Activated T-helper 1 cell treated with anti-CD3 and anti-CD28 coated beads, Interleukin-12 subunit alpha, Interleukin-12 subunit beta, Interleukin-2, Interleukin-4 antibody, amounts not matched to agents 30 ng/mL and 10 ng/mL and 1 ng/mL, durations not matched to agents 14 hours and 24 hours and 36 hours (primary cell): ENCODE measurements at regions of chr10 and their contacts with region 1.

Region 1: DNA sequence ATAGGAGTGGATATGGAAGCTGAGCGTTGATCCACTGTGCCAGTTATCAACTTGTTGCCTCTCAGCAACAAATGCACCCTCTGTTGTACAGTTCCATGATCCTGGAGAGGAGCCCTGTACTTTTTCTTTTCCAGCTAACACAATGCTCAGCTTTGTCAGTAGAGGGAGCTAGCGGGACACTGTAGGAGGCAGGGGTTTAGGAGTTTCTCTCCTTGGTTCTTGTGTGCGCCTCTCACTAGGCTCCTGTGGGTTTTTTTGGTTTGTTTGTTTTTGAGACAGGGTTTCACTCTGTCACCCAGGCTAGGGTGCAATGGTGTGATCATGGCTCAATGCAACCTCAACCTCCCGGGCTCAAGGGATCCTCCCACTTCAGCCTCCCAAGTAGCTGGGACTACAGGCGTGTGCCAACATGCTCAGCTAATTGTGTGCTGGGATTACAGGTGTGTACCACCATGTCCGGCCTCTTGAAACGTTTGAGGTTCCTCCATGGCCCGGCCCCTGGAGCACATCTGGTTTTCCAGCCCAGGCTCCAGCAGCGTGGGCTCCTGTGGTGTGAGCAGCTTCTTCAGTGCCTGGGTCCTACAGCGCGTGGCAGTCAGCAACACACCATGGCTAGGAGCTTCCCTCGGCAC is 12.0 kb upstream of the MARVELD1 start:
- DNase-seq: peak; percentile 34
- H3K4me3 Mint-ChIP-seq: no peak overlapping the region
- H3K27ac Mint-ChIP-seq: no peak overlapping the region
- H3K4me1 Mint-ChIP-seq: no peaks in the 10 kb centered on the region
- H3K27me3 Mint-ChIP-seq: peaks cover 8% of the 10 kb centered on the region

Region 2: GRCh38 chr10:97434055-97434454 is 267.5 kb before region 1 on chr10:
- intact Hi-C with region 1: no loop called
- DNase-seq: no peak
- H3K4me3 Mint-ChIP-seq: no peak overlapping the region
- H3K27ac Mint-ChIP-seq: peak overlapping the region; percentile 48
- H3K4me1 Mint-ChIP-seq: peaks cover 14% of the 10 kb centered on the region
- H3K27me3 Mint-ChIP-seq: no peaks in the 10 kb centered on the region

Region 3: GRCh38 chr10:97676770-97677581 is 24.6 kb before region 1 on chr10:
- intact Hi-C with region 1: loop called (anchors 2 kb)
- DNase-seq: no peak
- H3K4me3 Mint-ChIP-seq: no peak overlapping the region
- H3K27ac Mint-ChIP-seq: no peak overlapping the region
- H3K4me1 Mint-ChIP-seq: peaks cover 10% of the 10 kb centered on the region
- H3K27me3 Mint-ChIP-seq: no peaks in the 10 kb centered on the region

Region 4: DNA sequence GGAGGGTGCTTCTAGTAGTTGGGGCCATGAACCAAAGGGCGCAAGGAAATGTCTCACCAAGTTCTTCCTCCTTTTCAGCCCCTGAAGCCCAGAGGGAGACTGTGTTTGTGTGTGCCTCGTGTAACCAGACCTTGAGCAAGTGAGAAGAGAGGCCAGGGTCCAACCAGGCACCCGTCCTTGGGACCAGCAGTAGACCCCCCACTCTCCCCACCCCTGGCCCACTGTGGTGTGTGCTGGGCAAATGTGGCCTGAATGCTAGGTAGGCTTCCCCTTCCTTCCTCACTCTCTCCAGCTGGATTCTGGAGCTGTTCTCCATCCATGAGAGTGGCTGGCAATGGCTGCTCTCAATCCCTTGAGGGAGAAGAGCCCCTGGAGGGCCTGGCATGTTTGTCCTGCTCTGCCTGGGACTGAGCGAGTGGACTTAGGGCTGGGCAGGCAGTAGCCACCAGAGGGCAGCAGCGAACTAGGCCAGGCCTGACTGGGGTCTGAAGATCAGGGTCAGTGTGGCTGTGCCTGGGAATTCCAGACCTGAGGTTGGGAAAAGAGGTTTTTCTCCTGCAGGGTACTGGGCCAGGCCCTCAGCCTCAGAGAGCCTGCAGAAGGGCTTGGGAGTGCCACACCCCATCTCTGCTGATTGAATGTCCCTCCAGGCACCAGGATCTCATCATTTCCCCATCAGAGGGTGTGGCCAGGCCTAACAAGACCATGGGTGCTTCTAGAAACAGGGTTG is 57.8 kb after region 1 on chr10:
- intact Hi-C with region 1: loop called (anchors 1 kb)
- DNase-seq: peak; percentile 22
- H3K4me3 Mint-ChIP-seq: no peak overlapping the region
- H3K27ac Mint-ChIP-seq: no peak overlapping the region
- H3K4me1 Mint-ChIP-seq: no peaks in the 10 kb centered on the region
- H3K27me3 Mint-ChIP-seq: no peaks in the 10 kb centered on the region

Region 5: GRCh38 chr10:97792141-97792721 is 90.7 kb after region 1 on chr10:
- intact Hi-C with region 1: no loop called
- DNase-seq: peak; percentile 56
- H3K4me3 Mint-ChIP-seq: no peak overlapping the region
- H3K27ac Mint-ChIP-seq: no peak overlapping the region
- H3K4me1 Mint-ChIP-seq: peaks cover 21% of the 10 kb centered on the region
- H3K27me3 Mint-ChIP-seq: peaks cover 9% of the 10 kb centered on the region

Region 6: GRCh38 chr10:98055875-98056516 is 354.4 kb after region 1 on chr10:
- intact Hi-C with region 1: no loop called
- DNase-seq: no peak
- H3K4me3 Mint-ChIP-seq: no peak overlapping the region
- H3K27ac Mint-ChIP-seq: no peak overlapping the region
- H3K4me1 Mint-ChIP-seq: no peaks in the 10 kb centered on the region
- H3K27me3 Mint-ChIP-seq: peaks cover 3% of the 10 kb centered on the region

Region 7: DNA sequence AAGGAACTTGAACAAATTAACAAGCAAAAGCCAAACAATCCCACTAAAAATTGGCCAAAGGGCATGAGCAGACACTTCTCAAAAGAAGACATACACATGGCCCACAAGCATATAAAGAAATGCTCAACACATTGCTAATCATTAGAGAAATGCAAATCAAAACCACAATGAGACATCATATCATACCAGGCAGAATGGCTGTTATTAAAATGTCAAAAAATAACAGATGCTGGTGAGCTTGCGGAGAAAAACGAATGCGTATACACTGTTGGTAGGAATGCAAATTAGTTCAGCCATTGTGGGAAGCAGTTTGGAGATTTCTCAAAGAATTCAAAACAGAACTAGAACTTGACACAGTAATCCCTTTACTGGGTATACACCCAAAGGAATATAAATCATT is 1056.9 kb after region 1 on chr10:
- intact Hi-C with region 1: no loop called
- DNase-seq: no peak
- H3K4me3 Mint-ChIP-seq: no peak overlapping the region
- H3K27ac Mint-ChIP-seq: no peak overlapping the region
- H3K4me1 Mint-ChIP-seq: no peaks in the 10 kb centered on the region
- H3K27me3 Mint-ChIP-seq: no peaks in the 10 kb centered on the region